HEK293T (cell line): ENCODE measurements at regions of chr5 and their contacts with region 1.

Region 1: DNA sequence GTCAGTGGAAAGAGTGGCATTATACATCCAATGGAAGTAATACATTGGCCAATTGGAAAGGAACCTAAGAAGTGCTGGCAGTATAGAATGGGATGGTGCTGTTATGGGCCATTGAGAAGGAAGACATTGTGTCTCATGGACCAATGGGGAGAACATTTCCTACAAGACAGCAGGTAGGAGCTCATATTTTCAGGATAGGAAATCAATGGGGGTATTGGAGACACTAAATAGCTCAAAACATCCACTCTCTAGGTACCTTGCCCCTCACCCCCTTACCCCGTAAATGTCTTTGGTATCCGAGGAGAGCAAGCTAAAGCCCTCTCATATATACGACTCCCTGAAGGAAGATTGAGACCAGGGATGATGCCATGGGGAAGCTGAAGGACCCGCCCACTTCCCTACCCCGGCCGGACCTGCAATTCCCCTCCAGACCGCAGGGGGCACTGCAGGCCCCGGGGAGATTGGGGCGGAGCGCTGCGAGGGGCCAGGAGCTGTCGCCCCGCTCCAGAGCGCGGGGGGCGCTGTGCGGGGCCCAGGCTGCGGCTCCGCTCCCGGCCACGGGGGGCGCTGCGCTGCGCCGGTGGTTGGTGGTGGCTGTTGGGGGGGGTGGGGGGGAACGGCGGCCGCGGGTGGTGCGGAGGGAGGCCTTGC is at the start of gene KDM3B:
- DNase-seq: peak; percentile 95

Region 2: GRCh38 chr5:138178516-138179276 is 173.5 kb before region 1 on chr5 and contains the starts of genes BRD8 and KIF20A:
- CTCF ChIA-PET with region 1: interaction called, 5 read pairs
- POLR2A ChIA-PET with region 1: interaction called, 10 read pairs
- DNase-seq: peak; percentile 89

Region 3: DNA sequence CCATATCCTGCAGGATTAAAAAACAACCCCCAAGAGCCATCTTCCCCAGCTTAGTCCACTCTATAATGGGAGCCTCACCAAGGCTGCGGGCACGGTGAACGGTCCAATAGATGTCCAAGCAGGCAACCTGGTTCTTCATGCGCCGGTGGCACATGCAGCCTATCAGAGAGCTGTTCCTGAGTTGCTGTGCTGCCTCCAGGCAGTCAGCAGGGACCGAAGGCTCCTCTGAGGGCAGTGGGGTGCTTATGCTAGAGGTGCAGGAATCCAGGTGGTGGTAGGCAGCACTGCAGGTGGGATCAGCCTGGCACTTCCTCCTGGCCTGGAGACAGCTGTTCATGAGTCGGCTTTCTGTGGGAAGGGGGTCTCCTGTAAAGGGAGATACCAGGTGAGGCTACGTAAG is 88.0 kb before region 1 on chr5:
- CTCF ChIA-PET with region 1: no interaction called
- POLR2A ChIA-PET with region 1: no interaction called
- DNase-seq: no peak

Region 4: DNA sequence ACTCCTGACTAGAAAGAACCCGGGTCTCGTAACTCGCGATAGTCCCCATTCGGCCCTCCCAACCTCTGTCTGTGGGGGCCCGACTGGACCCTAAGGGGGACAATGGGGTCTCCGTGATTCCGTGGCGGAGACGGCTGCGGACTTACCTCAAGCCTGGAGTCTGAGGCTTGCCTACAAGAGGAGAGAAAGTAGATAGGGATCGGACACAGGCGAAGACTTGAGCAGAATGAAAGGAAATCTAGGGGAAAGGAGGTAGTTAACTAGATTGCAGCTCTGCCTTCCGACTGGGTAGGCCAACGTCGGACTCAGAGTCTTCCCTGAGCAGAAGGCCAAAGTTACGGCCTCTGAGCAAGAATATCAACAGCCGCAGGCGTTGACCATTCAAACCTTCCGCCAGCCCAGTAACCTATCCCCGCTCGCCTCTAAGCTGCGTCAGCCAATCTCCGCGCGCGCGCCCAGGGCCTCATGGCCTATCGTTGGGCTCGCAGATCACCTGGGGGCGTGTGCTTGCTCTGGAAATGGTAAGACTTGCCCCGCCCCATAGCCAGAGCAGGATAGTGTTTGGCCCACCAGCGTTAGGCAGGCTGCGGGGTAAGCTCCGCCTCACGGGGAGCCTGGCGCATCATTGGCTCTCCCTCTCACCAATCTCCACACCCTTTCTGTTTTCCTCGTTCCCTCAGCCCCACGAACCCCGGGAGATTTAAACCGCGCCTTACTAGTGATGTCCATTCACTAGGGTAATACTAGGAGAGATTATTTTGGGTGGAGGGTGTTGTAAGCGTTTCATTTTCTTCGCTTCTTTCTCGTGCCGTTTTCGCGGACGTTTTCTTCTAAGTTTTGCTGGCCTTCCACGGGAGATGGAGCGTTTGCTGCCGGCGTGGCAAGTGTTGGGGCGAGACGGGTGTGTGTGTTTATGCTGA is 20.5 kb before region 1 on chr5 and contains the start of gene CDC25C:
- CTCF ChIA-PET with region 1: interaction called, 39 read pairs
- POLR2A ChIA-PET with region 1: interaction called, 124 read pairs
- DNase-seq: peak; percentile 94

Region 5: GRCh38 chr5:138337685-138338410 is 14.3 kb before region 1 on chr5 and contains the start of gene FAM53C:
- CTCF ChIA-PET with region 1: interaction called, 39 read pairs
- POLR2A ChIA-PET with region 1: interaction called, 124 read pairs
- DNase-seq: peak; percentile 82

Region 6: GRCh38 chr5:138369706-138370105 is 17.5 kb after region 1 on chr5:
- CTCF ChIA-PET with region 1: interaction called, 55 read pairs
- POLR2A ChIA-PET with region 1: interaction called, 9 read pairs
- DNase-seq: no peak

Region 7: GRCh38 chr5:138408023-138408422 is 55.8 kb after region 1 on chr5:
- CTCF ChIA-PET with region 1: interaction called, 10 read pairs
- POLR2A ChIA-PET with region 1: no interaction called
- DNase-seq: no peak

Region 8: DNA sequence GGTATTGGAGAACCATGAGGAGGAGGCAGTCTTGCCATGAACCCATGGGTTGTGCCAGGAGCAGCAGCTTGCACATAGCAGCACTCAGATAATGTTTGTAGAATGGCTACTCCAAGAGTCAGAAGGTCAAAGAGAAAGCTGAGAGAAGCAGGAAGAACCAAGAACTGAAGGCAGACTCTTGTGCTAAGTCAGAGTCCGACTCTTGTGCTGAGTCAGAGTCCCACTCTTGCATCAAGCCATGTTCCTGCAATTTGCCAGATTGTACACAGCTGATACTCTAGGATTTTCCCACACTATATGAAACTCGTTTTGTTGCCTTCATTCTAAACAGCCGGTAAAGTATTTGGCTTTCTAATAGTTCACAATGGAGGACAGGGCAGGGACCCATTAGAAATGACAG is 249.2 kb after region 1 on chr5:
- CTCF ChIA-PET with region 1: no interaction called
- POLR2A ChIA-PET with region 1: no interaction called
- DNase-seq: no peak